ENCODE measurements at regions of chr10 and their contacts with region 1.

Region 1: DNA sequence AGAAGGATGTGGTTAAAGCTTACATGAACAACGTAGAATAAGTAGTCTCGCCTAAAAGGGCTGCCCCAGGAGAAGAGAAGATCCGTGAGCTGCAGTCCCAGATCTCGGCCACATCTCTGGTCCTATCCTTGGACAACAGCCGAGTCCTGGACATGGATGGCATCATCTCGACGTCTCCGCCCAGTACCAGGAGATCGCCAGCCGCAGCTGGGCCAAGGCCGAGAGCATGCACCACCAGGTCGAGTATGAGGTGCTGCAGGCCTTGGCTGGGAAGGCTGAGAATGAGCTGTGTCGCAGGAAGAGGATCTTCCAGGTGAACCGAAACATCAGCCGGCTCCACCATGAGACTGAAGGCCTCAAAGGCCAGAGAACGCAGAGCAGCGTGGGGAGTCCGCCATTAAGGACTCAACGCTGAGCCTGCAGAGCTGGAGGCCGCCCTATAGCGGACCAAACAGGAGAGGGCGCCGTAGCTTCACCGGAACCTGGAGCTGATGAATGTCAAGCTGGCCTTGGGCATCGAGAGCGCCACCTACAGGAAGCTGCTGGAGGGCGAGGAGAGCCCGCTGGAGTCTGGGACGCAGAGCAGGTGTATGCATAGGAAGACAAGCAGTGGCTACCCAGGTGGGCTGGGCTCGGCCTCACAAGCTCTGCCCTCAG is 22.2 kb downstream of the LIPK start:
- DNase-seq: peak; percentile 99
- ATAC-seq: peak; percentile 97
- H3K4me3 Mint-ChIP-seq: no peak overlapping the region
- H3K27ac Mint-ChIP-seq: no peak overlapping the region
- H3K4me1 Mint-ChIP-seq: peaks cover 13% of the 10 kb centered on the region
- H3K27me3 Mint-ChIP-seq: peaks cover 49% of the 10 kb centered on the region
- CTCF ChIP-seq: peak; percentile 95

Region 2: GRCh38 chr10:88493691-88494483 is 234.3 kb before region 1 on chr10:
- CTCF ChIA-PET with region 1: no interaction called
- POLR2A ChIA-PET with region 1: no interaction called
- DNase-seq: no peak
- ATAC-seq: no peak
- H3K4me3 Mint-ChIP-seq: no peak overlapping the region
- H3K27ac Mint-ChIP-seq: no peak overlapping the region
- H3K4me1 Mint-ChIP-seq: peaks cover 20% of the 10 kb centered on the region
- H3K27me3 Mint-ChIP-seq: no peaks in the 10 kb centered on the region
- CTCF ChIP-seq: no peak

Region 3: GRCh38 chr10:88687853-88688467 is 40.3 kb before region 1 on chr10:
- CTCF ChIA-PET with region 1: interaction called, 17 read pairs
- POLR2A ChIA-PET with region 1: no interaction called
- DNase-seq: no peak
- ATAC-seq: no peak
- H3K4me3 Mint-ChIP-seq: no peak overlapping the region
- H3K27ac Mint-ChIP-seq: no peak overlapping the region
- H3K4me1 Mint-ChIP-seq: no peaks in the 10 kb centered on the region
- H3K27me3 Mint-ChIP-seq: peaks cover 56% of the 10 kb centered on the region
- CTCF ChIP-seq: peak; percentile 39; the same call in 1 of the 2 replicates

Region 4: DNA sequence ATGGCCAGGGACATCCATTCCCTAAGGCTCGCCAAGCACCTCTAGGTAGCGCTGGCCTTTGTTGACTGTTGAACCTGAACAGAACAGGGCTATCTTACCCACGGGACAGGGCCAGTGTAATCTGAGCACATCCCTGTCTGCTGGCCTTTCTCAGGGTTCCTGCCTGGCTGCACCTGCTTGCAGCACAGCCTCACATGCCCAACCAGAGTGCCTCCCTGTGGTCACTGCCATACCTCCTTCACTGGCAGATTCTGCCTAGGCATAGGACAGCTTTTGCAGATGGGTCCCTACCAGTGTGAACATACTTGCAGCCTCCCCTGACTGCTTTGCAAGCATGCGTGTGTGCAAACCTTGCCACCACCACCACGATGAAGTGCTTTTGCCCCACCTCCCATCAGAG is 15.8 kb after region 1 on chr10:
- CTCF ChIA-PET with region 1: interaction called, 77 read pairs
- POLR2A ChIA-PET with region 1: no interaction called
- DNase-seq: peak; percentile 36
- ATAC-seq: peak; percentile 98
- H3K4me3 Mint-ChIP-seq: no peak overlapping the region
- H3K27ac Mint-ChIP-seq: no peak overlapping the region
- H3K4me1 Mint-ChIP-seq: no peaks in the 10 kb centered on the region
- H3K27me3 Mint-ChIP-seq: peaks cover 9% of the 10 kb centered on the region
- CTCF ChIP-seq: no peak

Region 5: GRCh38 chr10:88791924-88792323 is 63.7 kb after region 1 on chr10:
- CTCF ChIA-PET with region 1: interaction called, 24 read pairs
- POLR2A ChIA-PET with region 1: no interaction called
- DNase-seq: peak; percentile 34
- ATAC-seq: peak; percentile 95
- H3K4me3 Mint-ChIP-seq: no peak overlapping the region
- H3K27ac Mint-ChIP-seq: no peak overlapping the region
- H3K4me1 Mint-ChIP-seq: peaks cover 6% of the 10 kb centered on the region; the same call in 1 of the 2 replicates
- H3K27me3 Mint-ChIP-seq: no peaks in the 10 kb centered on the region
- CTCF ChIP-seq: no peak

Region 6: GRCh38 chr10:88819290-88819689 is 91.1 kb after region 1 on chr10:
- CTCF ChIA-PET with region 1: interaction called, 14 read pairs
- POLR2A ChIA-PET with region 1: no interaction called
- DNase-seq: no peak
- ATAC-seq: no peak
- H3K4me3 Mint-ChIP-seq: no peak overlapping the region
- H3K27ac Mint-ChIP-seq: no peak overlapping the region
- H3K4me1 Mint-ChIP-seq: no peaks in the 10 kb centered on the region
- H3K27me3 Mint-ChIP-seq: peaks cover 5% of the 10 kb centered on the region; the same call in 1 of the 2 replicates
- CTCF ChIP-seq: no peak

Region 7: GRCh38 chr10:88853155-88853881 is 125.1 kb after region 1 on chr10:
- CTCF ChIA-PET with region 1: interaction called, 10 read pairs
- POLR2A ChIA-PET with region 1: no interaction called
- DNase-seq: no peak
- ATAC-seq: no peak
- H3K4me3 Mint-ChIP-seq: no peak overlapping the region
- H3K27ac Mint-ChIP-seq: 0 out of 2 replicates have a peak overlapping the region, but pooled peaks have one; percentile 5
- H3K4me1 Mint-ChIP-seq: peaks cover 31% of the 10 kb centered on the region
- H3K27me3 Mint-ChIP-seq: no peaks in the 10 kb centered on the region
- CTCF ChIP-seq: no peak

Measured in WTC11 (cell line).